Panc1 (cell line): ENCODE measurements at regions of chr2 and their contacts with region 1.

Region 1: GRCh38 chr2:13193898-13194297 is 477.2 kb downstream of the TRIB2 start:
- DNase-seq: peak; percentile 8
- ATAC-seq: no peak
- H3K4me3 ChIP-seq: no peak overlapping the region
- H3K27ac ChIP-seq: no peak overlapping the region
- H3K4me1 ChIP-seq: no peaks in the 10 kb centered on the region
- H3K27me3 ChIP-seq: no peaks in the 10 kb centered on the region; the same call in 1 of the 2 replicates
- CTCF ChIP-seq: peak; percentile 59

Region 2: DNA sequence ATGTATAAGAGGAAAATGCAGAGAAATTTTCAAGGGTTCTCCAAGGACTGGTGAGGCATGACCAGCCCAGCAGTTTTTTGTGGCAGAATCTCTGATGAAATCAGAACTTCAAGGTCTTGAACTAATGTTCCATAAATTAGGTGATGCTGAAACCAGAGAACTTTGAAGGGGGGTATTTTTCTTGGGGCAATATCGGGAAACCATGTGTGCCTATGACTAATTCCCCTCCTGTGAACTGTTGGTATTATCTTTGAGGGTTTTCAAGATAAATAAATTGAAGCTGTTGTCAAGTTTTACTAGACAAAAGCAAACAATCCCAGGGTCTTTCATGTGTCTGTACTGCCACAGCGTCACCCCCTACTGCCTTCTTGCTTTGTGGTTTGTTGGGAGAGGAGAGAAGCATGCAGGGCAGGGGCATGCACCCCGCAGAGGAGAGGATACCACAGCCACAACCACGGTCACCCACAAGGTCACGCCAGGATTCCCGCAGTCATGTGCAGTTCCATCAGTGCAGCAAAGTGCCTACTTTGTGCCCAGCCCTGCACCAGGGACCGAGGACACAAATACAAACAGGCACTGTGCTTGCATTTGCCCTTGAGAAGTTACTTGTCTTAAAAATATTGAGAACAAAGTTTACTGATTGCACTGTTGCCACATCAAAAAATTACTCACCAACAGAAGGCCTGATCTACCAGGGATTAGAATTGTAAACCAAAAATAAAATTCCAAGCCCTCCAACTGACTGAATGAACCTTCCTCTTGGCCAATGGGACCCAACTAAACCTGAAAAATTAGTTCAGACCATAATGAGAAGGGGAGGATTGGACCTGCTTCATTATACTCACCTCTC is 890.5 kb before region 1 on chr2:
- CTCF ChIA-PET with region 1: no interaction called
- POLR2A ChIA-PET with region 1: no interaction called
- in situ Hi-C with region 1: no loop called
- intact Hi-C with region 1: no loop called
- DNase-seq: no peak
- ATAC-seq: peak; percentile 90
- H3K4me3 ChIP-seq: no peak overlapping the region
- H3K27ac ChIP-seq: peak overlapping the region; percentile 71
- H3K4me1 ChIP-seq: peaks cover 6% of the 10 kb centered on the region
- H3K27me3 ChIP-seq: no peaks in the 10 kb centered on the region
- CTCF ChIP-seq: no peak

Region 3: DNA sequence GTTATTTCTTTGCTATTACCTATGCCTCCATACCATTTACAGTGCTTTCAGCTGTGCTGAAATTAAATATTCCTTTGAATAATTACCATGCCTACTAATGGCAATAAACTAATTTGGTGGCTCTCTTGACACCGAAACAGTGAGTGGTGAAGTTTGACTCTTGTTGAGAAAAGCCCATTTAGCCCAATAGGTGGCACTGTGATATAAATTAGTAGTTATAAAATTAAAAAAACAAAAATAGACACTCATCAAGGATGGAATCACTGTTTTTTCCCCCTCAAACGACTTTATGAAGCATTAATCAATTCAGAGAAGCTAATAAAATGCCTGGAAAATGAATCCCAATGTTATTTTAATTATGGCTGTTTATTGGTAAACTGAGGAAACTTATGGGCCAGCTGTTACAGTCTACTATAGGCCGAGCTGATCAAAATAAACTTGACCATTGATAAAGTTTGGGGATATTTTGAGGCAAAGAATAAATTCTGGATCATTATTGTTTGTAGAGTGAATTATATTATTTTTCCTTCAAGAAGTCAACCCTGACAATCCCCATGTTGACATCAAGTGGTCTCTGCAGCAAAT is 137.5 kb before region 1 on chr2:
- CTCF ChIA-PET with region 1: no interaction called
- POLR2A ChIA-PET with region 1: no interaction called
- in situ Hi-C with region 1: no loop called
- intact Hi-C with region 1: loop called (anchors 5 kb)
- DNase-seq: no peak
- ATAC-seq: no peak
- H3K4me3 ChIP-seq: no peak overlapping the region
- H3K27ac ChIP-seq: no peak overlapping the region
- H3K4me1 ChIP-seq: no peaks in the 10 kb centered on the region; the same call in 1 of the 2 replicates
- H3K27me3 ChIP-seq: no peaks in the 10 kb centered on the region; the same call in 1 of the 2 replicates
- CTCF ChIP-seq: peak; percentile 71; the same call in 1 of the 2 replicates

Region 4: GRCh38 chr2:14944562-14945346 is 1750.9 kb after region 1 on chr2:
- CTCF ChIA-PET with region 1: no interaction called
- POLR2A ChIA-PET with region 1: no interaction called
- in situ Hi-C with region 1: no loop called
- intact Hi-C with region 1: loop called (anchors 10 kb)
- DNase-seq: peak; percentile 8
- ATAC-seq: no peak
- H3K4me3 ChIP-seq: no peak overlapping the region
- H3K27ac ChIP-seq: no peak overlapping the region
- H3K4me1 ChIP-seq: no peaks in the 10 kb centered on the region
- H3K27me3 ChIP-seq: no peaks in the 10 kb centered on the region
- CTCF ChIP-seq: peak; percentile 59